ENCODE measurements at regions of chr2 and their contacts with region 1.

Region 1: DNA sequence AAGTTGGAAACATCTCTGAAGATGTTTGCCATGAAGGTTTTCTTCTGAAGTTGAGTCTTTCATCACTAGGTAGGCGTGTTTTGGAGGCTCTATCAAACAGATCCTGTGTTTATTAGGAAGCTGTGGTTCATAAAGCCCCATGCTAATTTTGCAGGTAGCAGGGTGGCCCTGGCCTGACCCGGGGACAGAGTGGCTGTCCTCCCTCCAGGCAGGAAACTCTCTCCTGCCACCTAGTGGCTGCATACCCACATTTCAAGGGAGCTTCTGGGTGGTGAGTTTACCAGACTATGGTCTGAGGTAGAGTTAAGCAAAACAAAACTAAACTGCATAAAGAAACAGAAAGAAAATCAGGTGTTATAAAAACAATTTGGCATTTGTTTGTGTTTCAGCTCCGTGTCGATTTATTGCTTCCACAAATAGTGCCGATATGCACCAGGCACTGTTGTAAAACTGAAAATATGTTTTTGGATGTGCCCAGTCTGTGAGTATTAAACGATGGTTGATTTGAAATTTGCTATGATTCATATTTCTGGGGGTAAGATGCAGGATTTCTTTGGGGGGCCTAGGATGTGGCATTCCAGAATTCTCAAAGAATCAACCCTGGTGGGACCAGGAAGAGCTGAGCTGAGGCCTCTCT is 26.0 kb upstream of the IL37 start:
- DNase-seq: peak; percentile 19 to 26
- ATAC-seq: peak in 2 of 8 donors; percentile 37 to 67
- H3K4me3 ChIP-seq: no peak overlapping the region
- H3K27ac ChIP-seq: no peak overlapping the region
- H3K4me1 ChIP-seq: peaks cover 0 to 24% (median 0%) of the 10 kb centered on the region in 9 donors
- H3K27me3 ChIP-seq: peaks cover 0 to 6% (median 0%) of the 10 kb centered on the region in 7 donors
- CTCF ChIP-seq: peak; percentile 27 to 85 (median 63)

Region 2: GRCh38 chr2:112764071-112765044 is 120.6 kb before region 1 on chr2 and contains the start of gene CKAP2L:
- intact Hi-C with region 1: loop called in 1 of 10 experiments (anchors 5 kb)
- DNase-seq: peak; percentile 93 to 97
- ATAC-seq: peak; percentile 99 to 100 (median 100)
- H3K4me3 ChIP-seq: peak within 1 kb of the TSS; percentile 40 to 87 (median 72)
- H3K27ac ChIP-seq: peak within 1 kb of the TSS in 5 of 10 donors; percentile 28 to 70 (median 39)
- H3K4me1 ChIP-seq: peaks cover 0 to 37% (median 14%) of the 10 kb centered on the region in 9 donors
- H3K27me3 ChIP-seq: no peaks in the 10 kb centered on the region
- CTCF ChIP-seq: peak in 1 of 9 donors; percentile 8
- total RNA-seq, gene CKAP2L: 0.34 to 1.8 (median 0.45) TPM in 6 of 10 donors, not detected in the others

Measured in heart right ventricle (tissue), 16 donors.